OCI-LY7 (cell line): ENCODE measurements at regions of chr3 and their contacts with region 1.

Region 1: GRCh38 chr3:120908030-120908794 is at the start of gene STXBP5L:
- DNase-seq: peak; percentile 89
- H3K4me3 ChIP-seq: peak within 1 kb of the TSS; percentile 74
- H3K27ac ChIP-seq: peak within 1 kb of the TSS; percentile 74
- H3K4me1 ChIP-seq: no peaks in the 10 kb centered on the region
- CTCF ChIP-seq: no peak
- total RNA-seq, gene STXBP5L: 2.1 and 2.7 TPM in 2 replicates

Region 2: DNA sequence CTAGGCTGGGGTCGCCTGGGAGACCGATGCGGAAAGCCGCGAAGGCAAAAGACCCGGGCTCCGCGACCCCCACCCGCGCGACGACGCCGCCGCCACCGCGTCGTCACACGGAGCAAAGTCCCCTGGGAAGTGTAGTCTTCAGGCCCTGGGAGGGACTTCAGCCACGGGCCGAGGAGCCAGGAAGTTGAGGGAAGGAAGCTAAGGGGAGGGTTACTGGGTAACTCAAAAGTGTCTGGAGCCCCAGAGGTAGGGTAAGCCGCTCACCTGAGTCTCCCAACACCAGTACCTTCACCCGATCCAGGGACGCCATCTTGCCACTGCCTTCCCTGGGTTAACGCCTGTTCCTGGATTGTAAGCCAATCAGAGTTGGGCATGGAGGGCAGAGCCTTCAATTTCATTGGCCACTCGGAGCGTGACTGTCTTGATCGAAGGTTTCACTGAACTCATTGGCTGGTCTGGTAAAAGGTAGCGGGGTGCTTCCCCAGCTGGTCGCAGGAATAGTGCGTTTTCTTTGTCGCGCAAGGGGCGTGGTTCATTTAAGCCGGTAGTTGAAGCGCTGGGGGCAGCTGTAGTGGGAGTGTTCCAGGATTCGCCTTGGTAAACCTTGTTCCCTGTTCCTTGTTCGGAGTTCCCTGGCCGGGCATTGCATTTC is 165.9 kb before region 1 on chr3 and contains the starts of genes GTF2E1 and RABL3:
- CTCF ChIA-PET with region 1: no interaction called
- POLR2A ChIA-PET with region 1: interaction called, 3 read pairs
- intact Hi-C with region 1: loop called (anchors 5 kb)
- DNase-seq: peak; percentile 99
- H3K4me3 ChIP-seq: peak within 1 kb of the TSS; percentile 99
- H3K27ac ChIP-seq: peak within 1 kb of the TSS; percentile 86
- H3K4me1 ChIP-seq: peaks cover 25% of the 10 kb centered on the region
- CTCF ChIP-seq: no peak
- total RNA-seq, gene GTF2E1: 14.8 and 16.3 TPM in 2 replicates
- total RNA-seq, gene RABL3: 7.7 and 15.7 TPM in 2 replicates

Region 3: GRCh38 chr3:120801484-120801883 is 106.7 kb before region 1 on chr3:
- CTCF ChIA-PET with region 1: no interaction called
- POLR2A ChIA-PET with region 1: interaction called, 3 read pairs
- intact Hi-C with region 1: loop called (anchors 2 kb)
- DNase-seq: peak; percentile 76
- H3K4me3 ChIP-seq: peak overlapping the region; percentile 49
- H3K27ac ChIP-seq: peak overlapping the region; percentile 86
- H3K4me1 ChIP-seq: peaks cover 55% of the 10 kb centered on the region
- CTCF ChIP-seq: no peak